SK-N-SH (cell line): ENCODE measurements at regions of chr14 and their contacts with region 1.

Region 1: GRCh38 chr14:100567009-100567876 is 20.0 kb downstream of the BEGAIN start:
- DNase-seq: peak; percentile 85
- H3K4me3 ChIP-seq: peak overlapping the region; percentile 58 to 59; a peak in 3 of 4 replicates
- H3K27ac ChIP-seq: peak overlapping the region in 1 of 2 experiments; percentile 94; a peak in 2 of 4 replicates
- H3K4me1 ChIP-seq: peaks cover 0 to 66% of the 10 kb centered on the region in 2 experiments; a peak in 1 of 4 replicates
- H3K27me3 ChIP-seq: peaks cover 18% of the 10 kb centered on the region
- CTCF ChIP-seq: no peak
- EP300 ChIP-seq: no peak
- RAD21 ChIP-seq: no peak

Region 2: GRCh38 chr14:100428727-100429126 is 138.5 kb before region 1 on chr14:
- CTCF ChIA-PET with region 1: no interaction called
- POLR2A ChIA-PET with region 1: interaction called, 19 read pairs
- DNase-seq: no peak
- H3K4me3 ChIP-seq: no peak overlapping the region
- H3K27ac ChIP-seq: peak overlapping the region; percentile 76 to 100
- H3K4me1 ChIP-seq: peaks cover 18 to 55% of the 10 kb centered on the region in 2 experiments; a peak in 3 of 4 replicates
- H3K27me3 ChIP-seq: no peaks in the 10 kb centered on the region
- CTCF ChIP-seq: no peak
- EP300 ChIP-seq: peak; percentile 65 to 66; a peak in 3 of 4 replicates
- RAD21 ChIP-seq: no peak

Region 3: DNA sequence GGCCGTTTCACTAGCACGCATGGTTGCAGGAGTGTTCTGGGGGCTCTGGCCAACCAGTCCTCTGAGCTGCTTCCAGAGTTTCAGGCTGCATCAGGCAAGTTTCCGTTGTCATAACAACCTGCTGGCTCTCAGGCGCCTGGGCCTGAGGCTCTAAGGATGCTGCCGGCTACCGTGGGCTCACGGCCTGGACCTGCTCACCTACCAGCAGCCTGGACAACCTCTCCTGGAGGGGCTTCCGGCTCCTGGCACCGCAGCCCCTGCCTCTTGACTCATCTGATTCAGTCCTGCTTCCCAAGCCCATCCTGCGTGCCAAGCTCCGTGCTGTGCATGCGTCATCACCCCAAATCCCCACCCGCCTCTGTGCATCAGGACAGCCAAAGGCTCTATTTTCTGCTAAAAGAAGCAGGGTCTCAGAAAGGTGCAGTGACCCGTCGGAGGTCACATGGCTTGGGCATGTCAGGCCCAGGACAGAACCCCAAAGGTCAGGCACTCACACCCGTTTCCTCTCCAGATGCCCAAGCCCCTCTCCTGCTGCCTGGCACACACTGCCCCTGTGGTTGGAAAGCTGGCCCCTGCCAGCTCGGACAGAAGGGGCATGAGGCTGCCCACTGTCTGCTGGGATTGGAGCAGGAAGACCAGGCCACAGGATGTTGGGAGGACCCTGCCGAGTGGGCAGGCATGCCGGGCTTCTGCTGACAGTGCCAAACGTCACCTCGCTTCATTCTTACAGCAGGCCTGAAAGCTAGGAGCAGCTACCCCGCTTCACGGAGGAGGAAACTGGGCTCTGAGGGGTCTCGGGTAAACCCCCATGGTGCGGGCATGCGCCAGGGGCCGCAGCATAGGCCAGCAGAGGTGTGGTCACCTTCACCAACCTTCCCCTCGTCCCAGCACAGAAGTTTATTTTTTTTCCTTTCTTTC is 14.2 kb after region 1 on chr14:
- CTCF ChIA-PET with region 1: interaction called, 6 read pairs
- POLR2A ChIA-PET with region 1: interaction called, 14 read pairs
- DNase-seq: peak; percentile 72
- H3K4me3 ChIP-seq: no peak overlapping the region
- H3K27ac ChIP-seq: peak overlapping the region in 1 of 2 experiments; percentile 59; a peak in 2 of 4 replicates
- H3K4me1 ChIP-seq: peaks cover 3 to 44% of the 10 kb centered on the region in 2 experiments; a peak in 2 of 4 replicates
- H3K27me3 ChIP-seq: no peaks in the 10 kb centered on the region
- CTCF ChIP-seq: no peak
- EP300 ChIP-seq: no peak
- RAD21 ChIP-seq: no peak

Region 4: GRCh38 chr14:100645192-100645990 is 78.1 kb after region 1 on chr14:
- CTCF ChIA-PET with region 1: interaction called, 4 read pairs
- POLR2A ChIA-PET with region 1: interaction called, 10 read pairs
- DNase-seq: peak; percentile 84
- H3K4me3 ChIP-seq: peak overlapping the region in 1 of 2 experiments; percentile 39; a peak in 1 of 4 replicates
- H3K27ac ChIP-seq: peak overlapping the region in 1 of 2 experiments; percentile 76; a peak in 2 of 4 replicates
- H3K4me1 ChIP-seq: peaks cover 5 to 34% of the 10 kb centered on the region in 2 experiments; a peak in 2 of 4 replicates
- H3K27me3 ChIP-seq: no peaks in the 10 kb centered on the region
- CTCF ChIP-seq: peak; percentile 53
- EP300 ChIP-seq: no peak
- RAD21 ChIP-seq: peak; percentile 86

Region 5: GRCh38 chr14:100654814-100655740 is 87.8 kb after region 1 on chr14:
- CTCF ChIA-PET with region 1: interaction called, 9 read pairs
- POLR2A ChIA-PET with region 1: interaction called, 14 read pairs
- DNase-seq: peak; percentile 84
- H3K4me3 ChIP-seq: no peak overlapping the region
- H3K27ac ChIP-seq: peak overlapping the region in 1 of 2 experiments; percentile 92; a peak in 2 of 4 replicates
- H3K4me1 ChIP-seq: peaks cover 0 to 75% of the 10 kb centered on the region in 2 experiments; a peak in 2 of 4 replicates
- H3K27me3 ChIP-seq: no peaks in the 10 kb centered on the region
- CTCF ChIP-seq: peak; percentile 59
- EP300 ChIP-seq: no peak
- RAD21 ChIP-seq: peak; percentile 58